Naive thymus-derived CD4-positive, alpha-beta T cell (primary cell): ENCODE measurements at regions of chr10 and their contacts with region 1.

Region 1: GRCh38 chr10:80382989-80383388 is 25.4 kb upstream of the PRXL2A start:
- DNase-seq: peak in 8 of 9 donors; percentile 34 to 79 (median 63)
- ATAC-seq: peak; percentile 65
- H3K4me3 ChIP-seq: no peak overlapping the region
- H3K4me3 Mint-ChIP-seq: peak overlapping the region in 5 of 10 donors; percentile 10 to 53 (median 45)
- H3K27ac ChIP-seq: no peak overlapping the region
- H3K27ac Mint-ChIP-seq: peak overlapping the region in 8 of 9 donors; percentile 14 to 85 (median 74)
- H3K4me1 ChIP-seq: peaks cover 0 to 16% of the 10 kb centered on the region in 2 donors
- H3K4me1 Mint-ChIP-seq: peaks cover 10 to 24% (median 19%) of the 10 kb centered on the region in 7 donors
- H3K27me3 ChIP-seq: no peaks in the 10 kb centered on the region
- H3K27me3 Mint-ChIP-seq: peaks cover 0 to 8% (median 0%) of the 10 kb centered on the region in 5 donors

Region 2: GRCh38 chr10:80260295-80261243 is 122.4 kb before region 1 on chr10:
- CTCF ChIA-PET with region 1: no interaction called
- POLR2A ChIA-PET with region 1: no interaction called
- intact Hi-C with region 1: no loop called
- DNase-seq: peak in 7 of 9 donors; percentile 10 to 52 (median 29)
- ATAC-seq: peak; percentile 60
- H3K4me3 ChIP-seq: no peak overlapping the region
- H3K4me3 Mint-ChIP-seq: no peak overlapping the region
- H3K27ac ChIP-seq: no peak overlapping the region
- H3K27ac Mint-ChIP-seq: no peak overlapping the region
- H3K4me1 ChIP-seq: no peaks in the 10 kb centered on the region
- H3K4me1 Mint-ChIP-seq: peaks cover 0 to 1% (median 0%) of the 10 kb centered on the region in 7 donors
- H3K27me3 ChIP-seq: no peaks in the 10 kb centered on the region
- H3K27me3 Mint-ChIP-seq: peaks cover 0 to 12% (median 5%) of the 10 kb centered on the region in 5 donors

Region 3: GRCh38 chr10:80504158-80504811 is 121.3 kb after region 1 on chr10:
- CTCF ChIA-PET with region 1: interaction called, 17 read pairs
- POLR2A ChIA-PET with region 1: interaction called, 3 read pairs
- intact Hi-C with region 1: loop called (anchors 1 kb)
- DNase-seq: no peak
- ATAC-seq: peak; percentile 52
- H3K4me3 ChIP-seq: no peak overlapping the region
- H3K4me3 Mint-ChIP-seq: peak overlapping the region; percentile 24 to 86 (median 71)
- H3K27ac ChIP-seq: peak overlapping the region; percentile 59
- H3K27ac Mint-ChIP-seq: peak overlapping the region; percentile 76 to 99 (median 89)
- H3K4me1 ChIP-seq: peaks cover 64 to 69% of the 10 kb centered on the region in 2 donors
- H3K4me1 Mint-ChIP-seq: peaks cover 63 to 84% (median 75%) of the 10 kb centered on the region in 7 donors
- H3K27me3 ChIP-seq: no peaks in the 10 kb centered on the region
- H3K27me3 Mint-ChIP-seq: no peaks in the 10 kb centered on the region

Region 4: GRCh38 chr10:80583685-80584084 is 200.7 kb after region 1 on chr10:
- CTCF ChIA-PET with region 1: interaction called, 3 read pairs
- POLR2A ChIA-PET with region 1: no interaction called
- intact Hi-C with region 1: loop called in 1 of 2 experiments (anchors 1 kb)
- DNase-seq: peak in 1 of 9 donors; percentile 23
- ATAC-seq: no peak
- H3K4me3 ChIP-seq: no peak overlapping the region
- H3K4me3 Mint-ChIP-seq: no peak overlapping the region
- H3K27ac ChIP-seq: no peak overlapping the region
- H3K27ac Mint-ChIP-seq: no peak overlapping the region
- H3K4me1 ChIP-seq: no peaks in the 10 kb centered on the region
- H3K4me1 Mint-ChIP-seq: peaks cover 0 to 10% (median 3%) of the 10 kb centered on the region in 7 donors
- H3K27me3 ChIP-seq: no peaks in the 10 kb centered on the region
- H3K27me3 Mint-ChIP-seq: peaks cover 0 to 13% (median 0%) of the 10 kb centered on the region in 5 donors

Region 5: GRCh38 chr10:80662577-80663261 is 279.7 kb after region 1 on chr10:
- CTCF ChIA-PET with region 1: interaction called, 3 read pairs
- POLR2A ChIA-PET with region 1: no interaction called
- intact Hi-C with region 1: loop called in 1 of 2 experiments (anchors 1 kb)
- DNase-seq: peak; percentile 30 to 73 (median 58)
- ATAC-seq: peak; percentile 70
- H3K4me3 ChIP-seq: no peak overlapping the region
- H3K4me3 Mint-ChIP-seq: peak overlapping the region in 9 of 10 donors; percentile 26 to 76 (median 60)
- H3K27ac ChIP-seq: no peak overlapping the region
- H3K27ac Mint-ChIP-seq: peak overlapping the region in 1 of 9 donors; percentile 7
- H3K4me1 ChIP-seq: peaks cover 4 to 5% of the 10 kb centered on the region in 2 donors
- H3K4me1 Mint-ChIP-seq: peaks cover 4 to 10% (median 8%) of the 10 kb centered on the region in 7 donors
- H3K27me3 ChIP-seq: peaks cover 0 to 6% of the 10 kb centered on the region in 2 donors
- H3K27me3 Mint-ChIP-seq: peaks cover 7 to 22% (median 16%) of the 10 kb centered on the region in 5 donors

Region 6: GRCh38 chr10:80924063-80924952 is 541.3 kb after region 1 on chr10:
- CTCF ChIA-PET with region 1: interaction called, 8 read pairs
- POLR2A ChIA-PET with region 1: no interaction called
- intact Hi-C with region 1: loop called (anchors 1 kb)
- DNase-seq: peak in 3 of 9 donors; percentile 1 to 14 (median 10)
- ATAC-seq: no peak
- H3K4me3 ChIP-seq: no peak overlapping the region
- H3K4me3 Mint-ChIP-seq: no peak overlapping the region
- H3K27ac ChIP-seq: no peak overlapping the region
- H3K27ac Mint-ChIP-seq: no peak overlapping the region
- H3K4me1 ChIP-seq: no peaks in the 10 kb centered on the region
- H3K4me1 Mint-ChIP-seq: no peaks in the 10 kb centered on the region
- H3K27me3 ChIP-seq: no peaks in the 10 kb centered on the region
- H3K27me3 Mint-ChIP-seq: peaks cover 17 to 32% (median 24%) of the 10 kb centered on the region in 5 donors

Region 7: DNA sequence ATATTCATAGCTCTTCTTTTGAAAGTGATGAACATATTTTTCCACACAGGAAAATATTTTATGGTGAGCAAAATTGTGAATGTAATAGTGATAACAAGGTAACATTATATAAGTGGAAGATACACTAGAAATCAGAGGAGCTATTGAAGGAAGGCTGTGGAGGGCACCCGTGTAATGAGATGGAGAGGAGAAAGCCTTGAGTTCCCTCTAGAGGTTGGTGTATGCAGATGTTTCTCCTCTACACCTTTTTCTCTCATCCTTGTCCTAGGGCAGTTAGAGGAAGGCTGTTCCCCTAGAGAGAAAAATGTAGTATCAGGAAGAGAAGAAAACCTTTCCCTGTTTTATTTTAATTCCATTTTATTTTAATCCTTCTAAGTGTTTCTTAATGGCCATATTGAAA is 1437.4 kb after region 1 on chr10:
- CTCF ChIA-PET with region 1: no interaction called
- POLR2A ChIA-PET with region 1: no interaction called
- intact Hi-C with region 1: loop called in 1 of 2 experiments (anchors 1 kb)
- DNase-seq: peak in 5 of 9 donors; percentile 2 to 35 (median 17)
- ATAC-seq: no peak
- H3K4me3 ChIP-seq: no peak overlapping the region
- H3K4me3 Mint-ChIP-seq: no peak overlapping the region
- H3K27ac ChIP-seq: no peak overlapping the region
- H3K27ac Mint-ChIP-seq: no peak overlapping the region
- H3K4me1 ChIP-seq: no peaks in the 10 kb centered on the region
- H3K4me1 Mint-ChIP-seq: no peaks in the 10 kb centered on the region
- H3K27me3 ChIP-seq: no peaks in the 10 kb centered on the region
- H3K27me3 Mint-ChIP-seq: no peaks in the 10 kb centered on the region